GM12878 (cell line): ENCODE measurements at regions of chr3 and their contacts with region 1.

Region 1: GRCh38 chr3:20125897-20126296 is 60.1 kb downstream of the SGO1 start:
- DNase-seq: peak; percentile 71
- ATAC-seq: peak; percentile 99
- H3K4me3 ChIP-seq: peak overlapping the region; percentile 27; the same call in 1 of the 2 replicates
- H3K27ac ChIP-seq: peak overlapping the region; percentile 62
- H3K4me1 ChIP-seq: peaks cover 14% of the 10 kb centered on the region
- H3K27me3 ChIP-seq: no peaks in the 10 kb centered on the region
- CTCF ChIP-seq: no peak
- EP300 ChIP-seq: peak; percentile 56 to 71; a peak in 2 of 4 replicates
- POLR2A ChIP-seq: no peak
- RAD21 ChIP-seq: no peak

Region 2: DNA sequence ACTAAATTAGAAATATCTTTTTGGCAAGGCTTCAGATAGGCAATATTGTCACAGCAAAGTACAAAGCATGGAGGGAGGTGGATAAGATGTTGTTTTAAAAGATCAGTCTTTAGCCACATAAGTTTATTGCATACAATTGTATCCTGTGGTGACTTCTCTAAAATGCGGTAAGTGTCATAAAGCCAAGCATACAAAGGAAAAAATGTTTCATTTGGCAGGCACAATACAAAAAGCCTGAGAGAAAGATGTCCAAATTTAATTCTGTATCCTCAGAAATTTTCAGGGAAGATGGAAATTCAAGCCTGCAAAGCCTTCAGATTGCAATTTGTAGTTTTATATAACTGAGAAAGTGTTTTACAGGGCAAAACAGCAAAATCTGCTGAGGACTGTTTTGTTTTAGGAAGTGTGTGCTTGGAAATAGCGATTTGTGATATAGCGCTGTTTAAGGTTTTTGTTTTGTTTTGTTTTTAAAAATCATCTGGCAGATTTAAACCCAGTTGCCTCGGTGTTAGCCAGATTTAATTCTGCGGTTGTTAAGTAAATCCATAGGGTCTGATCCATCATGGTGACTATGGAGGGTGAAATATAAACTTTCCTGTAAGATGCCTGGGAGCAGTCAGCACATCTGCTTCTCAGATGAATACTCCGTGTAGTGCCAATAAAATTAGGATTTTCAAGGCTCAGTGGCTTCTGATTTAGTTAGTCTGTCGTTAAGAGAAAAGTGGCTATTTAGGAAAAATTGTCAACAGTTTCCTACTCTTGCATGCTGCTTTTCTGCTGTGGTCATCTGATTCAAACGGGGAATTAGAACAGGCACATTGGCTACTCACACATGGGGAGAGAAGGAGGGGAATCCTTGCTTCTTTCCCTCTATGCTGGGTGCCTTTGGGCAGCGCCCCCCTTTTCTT is 77.7 kb before region 1 on chr3:
- CTCF ChIA-PET with region 1: no interaction called
- POLR2A ChIA-PET with region 1: interaction called, 3 read pairs
- RAD21 ChIA-PET with region 1: no interaction called
- SMC1A ChIA-PET with region 1: interaction called, 6 read pairs
- in situ Hi-C with region 1: no loop called
- intact Hi-C with region 1: loop called (anchors 2 kb)
- DNase-seq: no peak
- ATAC-seq: peak; percentile 5
- H3K4me3 ChIP-seq: peak overlapping the region; percentile 62
- H3K27ac ChIP-seq: peak overlapping the region; percentile 27
- H3K4me1 ChIP-seq: peaks cover 25% of the 10 kb centered on the region
- H3K27me3 ChIP-seq: no peaks in the 10 kb centered on the region
- CTCF ChIP-seq: no peak
- EP300 ChIP-seq: no peak
- POLR2A ChIP-seq: no peak
- RAD21 ChIP-seq: no peak

Region 3: GRCh38 chr3:20104167-20104661 is 21.7 kb before region 1 on chr3:
- CTCF ChIA-PET with region 1: interaction called, 4 read pairs
- POLR2A ChIA-PET with region 1: interaction called, 4 read pairs
- RAD21 ChIA-PET with region 1: no interaction called
- SMC1A ChIA-PET with region 1: interaction called, 11 read pairs
- in situ Hi-C with region 1: no loop called
- intact Hi-C with region 1: no loop called
- DNase-seq: peak; percentile 13
- ATAC-seq: peak; percentile 91
- H3K4me3 ChIP-seq: 0 out of 2 replicates have a peak overlapping the region, but pooled peaks have one; percentile 36
- H3K27ac ChIP-seq: no peak overlapping the region
- H3K4me1 ChIP-seq: peaks cover 16% of the 10 kb centered on the region
- H3K27me3 ChIP-seq: no peaks in the 10 kb centered on the region
- CTCF ChIP-seq: no peak
- EP300 ChIP-seq: peak in 1 of 2 experiments; percentile 42; a peak in 1 of 4 replicates
- POLR2A ChIP-seq: no peak
- RAD21 ChIP-seq: no peak